Ovary (tissue), 10 donors: ENCODE measurements at regions of chr6 and their contacts with region 1.

Region 1: DNA sequence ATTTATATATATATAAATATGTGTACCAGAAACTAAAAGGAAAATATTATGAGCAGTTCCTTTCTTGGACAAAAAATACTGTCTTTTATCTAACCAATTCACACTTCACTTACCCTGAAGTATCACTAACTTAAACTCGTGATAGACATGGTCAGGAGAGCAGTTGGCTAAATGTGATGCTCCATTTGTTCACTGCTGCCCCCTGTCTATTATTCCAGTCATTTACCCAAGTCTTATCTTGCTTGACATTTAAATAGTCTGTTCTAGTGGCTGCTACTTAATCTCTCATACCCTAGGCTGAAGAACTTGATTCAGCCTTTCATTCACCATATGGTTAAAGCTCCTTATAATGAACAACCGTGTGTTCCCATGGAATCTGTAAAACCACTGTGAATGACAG is 789.6 kb upstream of the EYS start:
- DNase-seq: no peak
- H3K4me3 ChIP-seq: no peak overlapping the region
- H3K27ac ChIP-seq: no peak overlapping the region
- H3K4me1 ChIP-seq: no peaks in the 10 kb centered on the region
- H3K27me3 ChIP-seq: no peaks in the 10 kb centered on the region
- CTCF ChIP-seq: no peak
- EP300 ChIP-seq: no peak
- POLR2A ChIP-seq: no peak

Region 2: DNA sequence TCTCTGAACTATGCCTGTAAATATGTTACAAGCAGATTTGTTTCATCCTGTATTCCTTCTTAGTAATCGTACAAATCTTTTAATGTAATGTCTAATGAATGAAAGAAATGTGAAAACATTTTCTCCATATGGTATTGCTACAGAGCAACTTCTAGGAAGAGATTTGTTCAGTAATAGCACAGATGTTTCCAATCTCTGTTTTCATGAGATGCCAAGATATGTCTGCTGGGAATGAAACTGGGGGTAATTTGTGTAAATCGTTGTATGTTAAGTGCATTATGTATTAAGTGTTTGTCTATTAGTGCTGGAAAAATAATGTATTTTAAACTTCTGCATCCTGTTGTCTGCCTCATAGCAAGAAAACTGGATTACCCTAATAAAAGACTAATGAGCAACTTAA is 67.4 kb before region 1 on chr6:
- intact Hi-C with region 1: no loop called
- DNase-seq: no peak
- H3K4me3 ChIP-seq: no peak overlapping the region
- H3K27ac ChIP-seq: no peak overlapping the region
- H3K4me1 ChIP-seq: no peaks in the 10 kb centered on the region
- H3K27me3 ChIP-seq: no peaks in the 10 kb centered on the region
- CTCF ChIP-seq: no peak
- EP300 ChIP-seq: no peak
- POLR2A ChIP-seq: no peak

Region 3: DNA sequence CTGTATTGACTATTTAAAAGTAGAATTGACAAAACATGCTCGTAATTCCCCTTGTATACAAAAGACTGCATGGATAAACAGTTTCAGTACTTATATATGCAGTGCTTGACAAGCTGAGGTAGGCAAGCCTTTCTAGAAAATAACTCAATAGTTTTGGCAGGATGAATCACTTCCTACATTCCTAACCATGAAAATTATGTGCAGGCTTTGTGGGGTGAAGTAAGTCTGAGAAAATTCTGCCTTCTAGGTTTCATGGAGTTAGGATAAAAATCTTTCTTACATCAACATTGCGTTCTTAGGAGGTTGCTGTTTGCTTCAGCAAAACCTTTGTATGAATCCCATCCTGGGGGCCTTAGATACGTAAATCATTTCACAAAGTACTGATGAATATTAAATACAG is 11.8 kb after region 1 on chr6:
- intact Hi-C with region 1: loop called in 1 of 4 experiments (anchors 1 kb)
- DNase-seq: no peak
- H3K4me3 ChIP-seq: no peak overlapping the region
- H3K27ac ChIP-seq: no peak overlapping the region
- H3K4me1 ChIP-seq: no peaks in the 10 kb centered on the region
- H3K27me3 ChIP-seq: no peaks in the 10 kb centered on the region
- CTCF ChIP-seq: no peak
- EP300 ChIP-seq: no peak
- POLR2A ChIP-seq: no peak

Region 4: GRCh38 chr6:66948106-66948505 is 451.4 kb after region 1 on chr6:
- intact Hi-C with region 1: no loop called
- DNase-seq: no peak
- H3K4me3 ChIP-seq: no peak overlapping the region
- H3K27ac ChIP-seq: no peak overlapping the region
- H3K4me1 ChIP-seq: no peaks in the 10 kb centered on the region
- H3K27me3 ChIP-seq: no peaks in the 10 kb centered on the region
- CTCF ChIP-seq: no peak
- EP300 ChIP-seq: no peak
- POLR2A ChIP-seq: no peak